ENCODE measurements at regions of chr5 and their contacts with region 1.

Region 1: GRCh38 chr5:122220511-122220910 is 91.2 kb downstream of the ZNF474 start:
- DNase-seq: no peak
- H3K4me3 Mint-ChIP-seq: no peak overlapping the region
- H3K27ac Mint-ChIP-seq: no peak overlapping the region
- H3K4me1 Mint-ChIP-seq: no peaks in the 10 kb centered on the region
- H3K27me3 Mint-ChIP-seq: peaks cover 12% of the 10 kb centered on the region

Region 2: GRCh38 chr5:121478646-121479045 is 741.9 kb before region 1 on chr5:
- CTCF ChIA-PET with region 1: no interaction called
- intact Hi-C with region 1: no loop called
- DNase-seq: no peak
- H3K4me3 Mint-ChIP-seq: no peak overlapping the region
- H3K27ac Mint-ChIP-seq: no peak overlapping the region
- H3K4me1 Mint-ChIP-seq: no peaks in the 10 kb centered on the region
- H3K27me3 Mint-ChIP-seq: no peaks in the 10 kb centered on the region

Region 3: GRCh38 chr5:122236270-122237040 is 15.9 kb after region 1 on chr5:
- CTCF ChIA-PET with region 1: no interaction called
- intact Hi-C with region 1: loop called (anchors 2 kb)
- DNase-seq: no peak
- H3K4me3 Mint-ChIP-seq: no peak overlapping the region
- H3K27ac Mint-ChIP-seq: no peak overlapping the region
- H3K4me1 Mint-ChIP-seq: no peaks in the 10 kb centered on the region
- H3K27me3 Mint-ChIP-seq: no peaks in the 10 kb centered on the region